Ovary (tissue), 10 donors: ENCODE measurements at regions of chr9 and their contacts with region 1.

Region 1: GRCh38 chr9:136031741-136032730 is 63.1 kb downstream of the NACC2 start:
- DNase-seq: no peak
- H3K4me3 ChIP-seq: no peak overlapping the region
- H3K27ac ChIP-seq: no peak overlapping the region
- H3K4me1 ChIP-seq: no peaks in the 10 kb centered on the region
- H3K27me3 ChIP-seq: no peaks in the 10 kb centered on the region
- CTCF ChIP-seq: no peak
- EP300 ChIP-seq: no peak
- POLR2A ChIP-seq: no peak

Region 2: GRCh38 chr9:136089697-136090045 is 57.6 kb after region 1 on chr9:
- intact Hi-C with region 1: loop called in 1 of 4 experiments (anchors 10 kb)
- DNase-seq: no peak
- H3K4me3 ChIP-seq: no peak overlapping the region
- H3K27ac ChIP-seq: no peak overlapping the region
- H3K4me1 ChIP-seq: peaks cover 7% of the 10 kb centered on the region
- H3K27me3 ChIP-seq: no peaks in the 10 kb centered on the region
- CTCF ChIP-seq: no peak
- EP300 ChIP-seq: no peak
- POLR2A ChIP-seq: no peak